CD14-positive monocyte (primary cell): ENCODE measurements at regions of chr2 and their contacts with region 1.

Region 1: DNA sequence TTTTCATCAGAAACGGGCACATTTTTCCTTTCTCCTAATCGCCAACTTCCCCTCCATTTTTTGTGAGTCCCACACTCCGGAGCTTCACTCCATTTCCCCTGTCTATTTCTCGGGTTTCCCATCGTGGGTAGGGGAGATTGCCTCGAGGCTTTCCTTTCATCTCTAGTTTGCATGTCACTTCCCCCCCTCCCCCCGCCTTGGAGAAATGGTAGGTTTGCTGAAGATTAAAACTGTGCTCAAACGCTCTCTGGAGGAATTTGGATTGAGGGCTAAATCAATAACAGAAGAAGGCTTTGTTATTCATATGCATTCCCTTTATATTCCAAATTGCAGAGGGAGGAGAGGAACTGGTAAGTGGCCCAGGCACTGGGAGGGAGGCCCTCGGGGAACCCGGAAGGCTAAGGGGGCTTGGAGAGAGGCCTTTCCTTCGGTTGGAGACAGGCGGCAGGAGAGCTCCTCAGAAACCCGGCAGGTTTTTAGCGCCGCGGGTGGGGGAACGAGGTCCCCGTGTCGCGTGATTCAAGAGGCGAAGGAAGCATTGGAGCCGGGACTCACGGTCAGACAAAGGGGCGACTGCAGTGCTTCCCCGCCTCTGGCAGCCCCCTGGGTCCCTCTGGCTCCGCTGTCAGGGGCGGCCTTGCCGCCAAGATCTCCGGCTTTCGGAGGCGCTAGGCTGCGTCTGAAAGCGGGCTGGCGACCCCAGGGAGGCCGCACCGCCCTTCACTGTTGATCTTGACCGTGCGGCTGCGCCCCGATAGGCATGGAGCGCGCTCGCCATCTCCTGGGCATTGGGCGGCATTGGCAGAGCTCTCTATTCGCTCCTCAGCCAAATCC is 2.4 kb upstream of the HOXD12 start:
- DNase-seq: peak; percentile 36 to 62 (median 40)
- H3K4me3 ChIP-seq: peak overlapping the region; percentile 15 to 73 (median 21)
- H3K4me3 Mint-ChIP-seq: peak overlapping the region; percentile 75 to 97
- H3K27ac ChIP-seq: no peak overlapping the region
- H3K27ac Mint-ChIP-seq: no peak overlapping the region
- H3K4me1 ChIP-seq: peaks cover 18 to 28% of the 10 kb centered on the region in 2 donors
- H3K4me1 Mint-ChIP-seq: peaks cover 28% of the 10 kb centered on the region
- H3K27me3 ChIP-seq: peaks cover 89 to 94% of the 10 kb centered on the region in 2 donors
- H3K27me3 Mint-ChIP-seq: peaks cover 90 to 97% (median 94%) of the 10 kb centered on the region in 3 donors
- CTCF ChIP-seq: peak; percentile 83

Region 2: DNA sequence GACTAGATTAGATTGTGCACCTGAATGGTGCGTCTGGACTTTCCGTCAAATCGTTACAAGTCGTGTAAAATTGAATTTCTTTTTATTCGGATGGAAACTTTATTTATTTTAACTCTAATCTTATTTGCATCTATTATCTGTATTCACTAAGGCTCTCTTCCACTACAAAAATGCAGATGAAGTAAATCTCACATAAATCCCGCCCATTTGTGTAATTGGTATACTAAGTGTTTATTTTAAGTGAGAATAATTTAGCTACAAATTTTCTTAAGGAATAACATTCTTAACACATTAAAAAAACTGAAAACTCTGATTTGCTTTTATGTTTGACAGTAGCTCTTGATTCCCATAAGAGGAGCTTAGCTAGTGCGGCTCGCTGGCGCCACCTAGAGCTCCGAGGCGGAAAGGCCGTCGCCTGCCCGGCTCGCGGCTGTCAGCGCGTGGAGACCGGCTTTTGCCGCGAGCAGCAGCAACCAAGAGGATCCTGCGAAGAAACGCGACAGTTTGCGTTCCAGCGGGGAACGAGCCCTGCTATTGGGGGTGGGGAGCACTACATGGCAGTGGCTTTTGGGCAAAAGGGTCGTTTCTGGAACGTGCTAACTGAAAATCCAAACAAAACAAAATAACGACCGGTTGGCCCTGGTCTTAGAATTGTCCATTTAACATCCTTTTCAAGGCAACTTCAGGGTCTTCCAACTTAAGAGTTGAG is 1755.8 kb before region 1 on chr2:
- intact Hi-C with region 1: loop called in 1 of 2 experiments (anchors 10 kb)
- DNase-seq: peak; percentile 81 to 88 (median 83)
- H3K4me3 ChIP-seq: peak overlapping the region in 1 of 3 experiments; percentile 52
- H3K4me3 Mint-ChIP-seq: peak overlapping the region; percentile 62 to 87
- H3K27ac ChIP-seq: no peak overlapping the region
- H3K27ac Mint-ChIP-seq: peak overlapping the region in 1 of 7 donors; percentile 58
- H3K4me1 ChIP-seq: peaks cover 47 to 57% of the 10 kb centered on the region in 2 donors
- H3K4me1 Mint-ChIP-seq: peaks cover 56% of the 10 kb centered on the region
- H3K27me3 ChIP-seq: peaks cover 89 to 97% of the 10 kb centered on the region in 2 donors
- H3K27me3 Mint-ChIP-seq: peaks cover 83 to 94% (median 90%) of the 10 kb centered on the region in 3 donors
- CTCF ChIP-seq: peak; percentile 99

Region 3: DNA sequence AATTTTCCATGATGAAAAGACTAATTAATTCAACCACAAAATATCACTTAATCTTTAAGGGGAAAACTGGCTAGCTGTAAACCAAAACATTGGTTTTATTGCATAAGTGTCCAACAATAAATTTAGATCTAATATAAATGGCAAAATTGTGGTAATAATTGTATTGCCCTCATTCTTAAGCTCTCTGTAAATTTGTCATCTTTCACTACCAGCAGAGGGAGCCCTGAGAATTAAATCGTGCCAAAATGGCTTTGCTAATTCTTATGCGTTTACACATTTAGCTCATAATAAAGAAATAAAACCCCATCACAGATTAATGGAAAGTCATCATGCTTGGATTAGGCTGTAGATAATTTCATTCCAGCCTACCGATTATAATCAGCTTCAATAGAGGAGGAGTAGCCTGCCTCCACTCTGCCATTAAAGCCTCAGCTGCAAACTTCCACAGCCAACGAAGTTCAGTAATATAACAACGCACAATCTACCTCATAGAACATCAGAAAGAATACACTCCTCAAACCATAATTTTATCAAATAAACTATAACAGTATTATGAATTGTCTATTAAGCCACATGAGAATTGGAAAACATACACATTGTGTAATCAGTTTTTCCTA is 845.7 kb before region 1 on chr2:
- intact Hi-C with region 1: loop called in 1 of 2 experiments (anchors 5 kb)
- DNase-seq: peak in 1 of 3 donors; percentile 1
- H3K4me3 ChIP-seq: no peak overlapping the region
- H3K4me3 Mint-ChIP-seq: no peak overlapping the region
- H3K27ac ChIP-seq: no peak overlapping the region
- H3K27ac Mint-ChIP-seq: no peak overlapping the region
- H3K4me1 ChIP-seq: no peaks in the 10 kb centered on the region
- H3K4me1 Mint-ChIP-seq: no peaks in the 10 kb centered on the region
- H3K27me3 ChIP-seq: peaks cover 22 to 23% of the 10 kb centered on the region in 2 donors
- H3K27me3 Mint-ChIP-seq: peaks cover 12 to 19% (median 14%) of the 10 kb centered on the region in 3 donors
- CTCF ChIP-seq: peak; percentile 59

Region 4: GRCh38 chr2:175366815-175367214 is 730.4 kb before region 1 on chr2:
- intact Hi-C with region 1: loop called (anchors 5 kb)
- DNase-seq: peak; percentile 27 to 49 (median 44)
- H3K4me3 ChIP-seq: no peak overlapping the region
- H3K4me3 Mint-ChIP-seq: no peak overlapping the region
- H3K27ac ChIP-seq: no peak overlapping the region
- H3K27ac Mint-ChIP-seq: no peak overlapping the region
- H3K4me1 ChIP-seq: peaks cover 1 to 6% of the 10 kb centered on the region in 2 donors
- H3K4me1 Mint-ChIP-seq: peaks cover 8% of the 10 kb centered on the region
- H3K27me3 ChIP-seq: peaks cover 24 to 42% of the 10 kb centered on the region in 2 donors
- H3K27me3 Mint-ChIP-seq: peaks cover 15 to 31% (median 16%) of the 10 kb centered on the region in 3 donors
- CTCF ChIP-seq: peak; percentile 84

Region 5: DNA sequence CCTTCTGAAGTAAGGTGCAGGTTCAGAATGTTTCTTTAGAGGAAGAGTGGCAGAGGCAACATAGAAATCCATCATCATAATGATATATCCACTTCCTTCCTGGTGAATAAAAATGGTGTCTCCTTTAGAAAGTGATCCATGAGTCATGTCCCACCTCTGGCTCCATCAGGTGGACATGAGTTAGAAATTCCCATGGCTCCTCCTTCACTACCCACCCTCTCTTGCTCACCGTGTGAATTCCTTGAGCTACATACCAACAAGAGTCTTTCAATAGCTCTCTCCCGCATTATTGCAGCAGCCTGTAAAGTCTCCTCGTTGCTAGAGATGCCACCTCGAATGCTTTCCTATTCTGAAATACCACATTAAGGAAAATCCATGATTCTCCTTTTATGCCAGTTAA is 412.7 kb before region 1 on chr2:
- intact Hi-C with region 1: loop called (anchors 10 kb)
- DNase-seq: no peak
- H3K4me3 ChIP-seq: no peak overlapping the region
- H3K4me3 Mint-ChIP-seq: no peak overlapping the region
- H3K27ac ChIP-seq: no peak overlapping the region
- H3K27ac Mint-ChIP-seq: no peak overlapping the region
- H3K4me1 ChIP-seq: no peaks in the 10 kb centered on the region
- H3K4me1 Mint-ChIP-seq: no peaks in the 10 kb centered on the region
- H3K27me3 ChIP-seq: no peaks in the 10 kb centered on the region
- H3K27me3 Mint-ChIP-seq: peaks cover 0 to 3% (median 3%) of the 10 kb centered on the region in 3 donors
- CTCF ChIP-seq: no peak

Region 6: DNA sequence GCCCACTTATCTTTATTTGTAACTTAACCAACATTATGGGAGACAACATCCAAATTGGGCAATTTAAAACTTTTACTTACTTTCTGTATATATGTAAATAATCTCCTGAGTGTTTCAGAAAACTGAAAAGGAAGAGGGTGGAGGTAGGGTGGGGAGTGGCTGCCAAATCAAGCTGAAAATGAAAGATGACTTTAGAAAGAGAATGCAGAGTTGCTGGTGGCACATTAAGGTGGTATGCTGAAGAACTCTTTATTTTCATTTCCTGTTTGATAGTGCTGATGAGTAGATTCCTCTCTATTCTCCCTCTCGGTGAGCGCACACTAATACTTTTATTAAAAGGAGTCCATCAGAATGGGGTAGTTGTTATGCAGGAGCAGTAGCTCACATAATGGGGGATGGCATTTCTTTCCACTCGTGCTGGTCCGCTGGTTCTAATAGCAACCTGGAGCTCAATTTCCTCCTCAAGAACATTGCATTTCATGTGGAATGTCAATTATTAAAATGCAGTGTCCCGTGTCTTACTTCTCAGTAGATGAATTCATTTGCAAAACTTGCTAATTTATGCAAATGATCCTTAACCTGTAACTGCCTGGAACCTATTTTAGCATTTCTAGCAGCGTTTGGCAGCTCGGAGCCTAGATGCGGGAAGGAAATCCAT is 648.5 kb after region 1 on chr2:
- intact Hi-C with region 1: no loop called
- DNase-seq: no peak
- H3K4me3 ChIP-seq: no peak overlapping the region
- H3K4me3 Mint-ChIP-seq: no peak overlapping the region
- H3K27ac ChIP-seq: no peak overlapping the region
- H3K27ac Mint-ChIP-seq: no peak overlapping the region
- H3K4me1 ChIP-seq: no peaks in the 10 kb centered on the region
- H3K4me1 Mint-ChIP-seq: no peaks in the 10 kb centered on the region
- H3K27me3 ChIP-seq: no peaks in the 10 kb centered on the region
- H3K27me3 Mint-ChIP-seq: peaks cover 2 to 3% (median 2%) of the 10 kb centered on the region in 3 donors
- CTCF ChIP-seq: no peak